ENCODE measurements at regions of chr3 and their contacts with region 1.

Region 1: DNA sequence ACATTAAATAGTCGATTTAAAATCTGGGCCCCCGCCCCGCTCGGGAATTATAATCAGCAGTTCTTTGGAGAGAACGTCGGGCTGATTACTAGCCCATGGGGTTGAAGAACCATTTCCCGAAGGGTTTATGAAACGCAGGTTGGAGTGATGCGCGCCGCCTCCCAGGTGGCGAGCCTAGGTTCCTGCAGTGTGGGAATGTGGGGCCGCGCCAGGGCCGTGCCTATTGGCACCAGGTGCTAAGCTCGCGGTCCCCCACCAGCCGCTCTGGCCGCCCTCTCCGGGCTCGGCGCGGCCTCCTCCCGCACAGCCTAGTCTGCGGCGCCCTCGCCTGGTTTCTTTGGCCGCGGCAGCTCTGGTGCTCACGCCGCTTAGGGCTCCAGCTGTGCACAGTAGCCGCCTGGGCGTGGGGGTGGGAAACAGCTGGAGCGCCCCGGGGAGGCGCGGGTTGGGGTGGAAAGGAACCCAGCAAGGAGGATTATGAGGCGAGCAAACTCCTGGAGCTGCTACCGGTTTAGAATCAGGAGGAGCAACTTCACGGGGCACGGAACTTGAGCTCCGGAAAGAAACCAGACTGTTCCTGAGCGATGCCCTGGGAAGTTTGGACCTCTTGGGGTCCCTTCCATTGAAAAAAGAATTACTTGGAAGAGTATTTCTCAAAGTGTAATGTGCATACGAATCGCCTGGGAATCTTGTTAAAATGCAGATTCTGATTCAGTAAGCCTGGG is 5.6 kb upstream of the MECOM start:
- DNase-seq: peak; percentile 57
- ATAC-seq: peak; percentile 93
- H3K4me3 Mint-ChIP-seq: peak overlapping the region; percentile 48
- H3K27ac Mint-ChIP-seq: no peak overlapping the region
- H3K4me1 Mint-ChIP-seq: peaks cover 23% of the 10 kb centered on the region
- H3K27me3 Mint-ChIP-seq: peaks cover 79% of the 10 kb centered on the region

Region 2: DNA sequence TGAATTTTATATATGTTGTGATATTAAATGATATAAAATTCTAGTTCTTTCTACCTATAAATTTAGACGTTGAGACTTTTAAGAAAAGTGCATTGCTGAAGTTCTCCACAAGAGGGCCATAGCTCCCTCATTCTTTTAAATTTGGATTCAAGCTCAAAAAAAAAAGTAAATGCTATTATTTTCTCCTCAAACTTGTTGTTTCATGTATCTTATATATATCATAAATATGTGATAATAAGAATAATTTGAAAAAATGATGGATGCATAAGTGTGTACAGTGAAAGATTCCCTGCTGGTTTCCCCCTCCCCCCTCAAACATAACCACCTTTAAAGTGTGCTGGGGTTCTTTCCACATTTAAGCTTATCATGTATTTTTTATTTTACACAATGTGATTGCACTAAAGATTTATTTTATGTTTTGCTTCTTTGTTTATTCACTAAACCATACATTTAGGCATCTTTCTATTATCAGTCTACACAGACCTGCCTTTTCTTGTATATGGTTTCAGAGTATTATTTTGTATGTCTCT is 804.0 kb before region 1 on chr3:
- CTCF ChIA-PET with region 1: interaction called, 13 read pairs
- POLR2A ChIA-PET with region 1: no interaction called
- DNase-seq: no peak
- ATAC-seq: no peak
- H3K4me3 Mint-ChIP-seq: no peak overlapping the region
- H3K27ac Mint-ChIP-seq: no peak overlapping the region
- H3K4me1 Mint-ChIP-seq: no peaks in the 10 kb centered on the region
- H3K27me3 Mint-ChIP-seq: no peaks in the 10 kb centered on the region

Region 3: GRCh38 chr3:169149349-169149890 is 519.7 kb before region 1 on chr3:
- CTCF ChIA-PET with region 1: interaction called, 57 read pairs
- POLR2A ChIA-PET with region 1: no interaction called
- DNase-seq: peak; percentile 81
- ATAC-seq: peak; percentile 96
- H3K4me3 Mint-ChIP-seq: no peak overlapping the region
- H3K27ac Mint-ChIP-seq: no peak overlapping the region
- H3K4me1 Mint-ChIP-seq: peaks cover 23% of the 10 kb centered on the region
- H3K27me3 Mint-ChIP-seq: peaks cover 64% of the 10 kb centered on the region

Region 4: DNA sequence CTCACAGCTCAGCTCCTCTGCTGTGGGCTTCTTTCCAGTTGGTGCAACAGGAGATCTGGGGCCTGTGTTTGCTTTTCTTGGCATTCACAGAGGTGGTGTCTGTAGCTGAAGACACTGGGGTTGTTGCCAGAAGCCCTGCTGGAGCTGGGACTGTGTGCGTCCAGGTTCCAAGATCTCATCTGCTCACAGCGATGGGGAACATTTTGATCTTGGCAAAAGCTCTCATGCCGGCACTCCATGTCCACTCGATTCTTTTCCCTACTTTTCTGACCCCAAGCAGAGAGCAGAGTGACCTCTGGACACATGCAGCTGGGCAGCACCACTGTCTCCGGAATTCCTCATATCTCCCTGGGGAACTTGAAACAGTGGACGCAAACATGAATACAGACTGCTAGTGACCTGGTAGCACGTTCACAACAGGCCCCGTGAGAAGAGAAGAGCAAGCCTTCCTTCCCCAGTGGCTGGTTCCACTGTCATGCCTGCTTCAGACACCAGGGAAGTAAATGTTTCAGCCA is 30.5 kb after region 1 on chr3:
- CTCF ChIA-PET with region 1: no interaction called
- POLR2A ChIA-PET with region 1: no interaction called
- DNase-seq: no peak
- ATAC-seq: no peak
- H3K4me3 Mint-ChIP-seq: no peak overlapping the region
- H3K27ac Mint-ChIP-seq: no peak overlapping the region
- H3K4me1 Mint-ChIP-seq: no peaks in the 10 kb centered on the region
- H3K27me3 Mint-ChIP-seq: peaks cover 11% of the 10 kb centered on the region